IMR-90 (cell line): ENCODE measurements at regions of chr2 and their contacts with region 1.

Region 1: GRCh38 chr2:156659694-156660093 is 223.5 kb downstream of the GPD2 start:
- DNase-seq: no peak
- ATAC-seq: no peak
- H3K4me3 ChIP-seq: no peak overlapping the region
- H3K27ac ChIP-seq: no peak overlapping the region
- H3K4me1 ChIP-seq: no peaks in the 10 kb centered on the region
- H3K27me3 ChIP-seq: no peaks in the 10 kb centered on the region
- CTCF ChIP-seq: no peak
- POLR2A ChIP-seq: no peak
- RAD21 ChIP-seq: no peak

Region 2: GRCh38 chr2:156505696-156506095 is 154.0 kb before region 1 on chr2:
- CTCF ChIA-PET with region 1: no interaction called
- POLR2A ChIA-PET with region 1: no interaction called
- dilution Hi-C with region 1: no loop called
- in situ Hi-C with region 1: no loop called
- intact Hi-C with region 1: no loop called
- DNase-seq: no peak
- ATAC-seq: no peak
- H3K4me3 ChIP-seq: no peak overlapping the region
- H3K27ac ChIP-seq: no peak overlapping the region
- H3K4me1 ChIP-seq: no peaks in the 10 kb centered on the region
- H3K27me3 ChIP-seq: no peaks in the 10 kb centered on the region
- CTCF ChIP-seq: no peak
- POLR2A ChIP-seq: no peak
- RAD21 ChIP-seq: no peak

Region 3: DNA sequence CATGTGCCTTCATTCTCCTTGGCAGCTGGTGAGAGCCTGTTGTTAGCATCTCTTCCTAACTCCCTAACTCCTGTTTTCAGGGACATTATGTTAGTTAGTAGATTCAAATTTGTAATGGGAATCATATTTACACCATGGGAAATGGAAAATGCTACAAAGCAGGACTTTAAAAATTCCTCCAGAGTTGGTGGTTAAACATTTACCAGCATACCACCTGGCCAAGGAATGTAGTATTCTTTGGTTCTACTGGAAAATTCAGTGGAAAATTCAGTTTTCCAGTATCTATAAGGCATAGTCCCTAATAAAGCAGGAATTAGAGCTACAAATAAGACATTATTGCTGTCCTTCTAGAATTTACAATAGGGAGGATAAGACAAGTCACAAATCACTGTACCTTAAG is 68.2 kb after region 1 on chr2:
- CTCF ChIA-PET with region 1: no interaction called
- POLR2A ChIA-PET with region 1: no interaction called
- dilution Hi-C with region 1: no loop called
- in situ Hi-C with region 1: no loop called
- intact Hi-C with region 1: no loop called
- DNase-seq: no peak
- ATAC-seq: no peak
- H3K4me3 ChIP-seq: no peak overlapping the region
- H3K27ac ChIP-seq: no peak overlapping the region
- H3K4me1 ChIP-seq: no peaks in the 10 kb centered on the region
- H3K27me3 ChIP-seq: no peaks in the 10 kb centered on the region
- CTCF ChIP-seq: no peak
- POLR2A ChIP-seq: no peak
- RAD21 ChIP-seq: no peak

Region 4: DNA sequence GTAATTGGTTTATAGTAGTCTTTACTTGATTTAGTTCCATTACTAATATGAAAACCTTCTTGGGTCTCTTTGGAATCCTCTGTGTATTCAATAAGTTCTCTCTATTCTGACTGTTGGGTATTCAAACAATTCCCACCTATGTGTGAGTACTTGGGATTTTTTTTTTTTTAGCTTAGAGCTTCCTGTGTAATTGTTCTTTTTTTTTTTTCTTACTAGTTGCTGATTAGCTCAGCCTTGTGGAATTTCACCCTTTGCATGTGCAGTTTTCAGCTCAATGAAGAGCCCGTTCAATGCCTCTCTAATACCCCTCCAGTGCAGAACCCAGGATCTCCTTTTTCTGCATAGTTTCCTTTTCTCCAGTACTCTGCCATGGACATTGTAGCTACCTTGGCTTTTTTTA is 258.7 kb after region 1 on chr2:
- CTCF ChIA-PET with region 1: no interaction called
- POLR2A ChIA-PET with region 1: interaction called, 10 read pairs
- dilution Hi-C with region 1: no loop called
- in situ Hi-C with region 1: no loop called
- intact Hi-C with region 1: no loop called
- DNase-seq: peak; percentile 18
- ATAC-seq: no peak
- H3K4me3 ChIP-seq: no peak overlapping the region
- H3K27ac ChIP-seq: no peak overlapping the region
- H3K4me1 ChIP-seq: no peaks in the 10 kb centered on the region
- H3K27me3 ChIP-seq: no peaks in the 10 kb centered on the region
- CTCF ChIP-seq: no peak
- POLR2A ChIP-seq: no peak
- RAD21 ChIP-seq: no peak